ENCODE measurements at regions of chr7 and their contacts with region 1.

Region 1: GRCh38 chr7:138865843-138866242 is 67.8 kb upstream of the ATP6V0A4 start:
- DNase-seq: peak; percentile 73
- H3K4me3 Mint-ChIP-seq: no peak overlapping the region
- H3K27ac Mint-ChIP-seq: no peak overlapping the region
- H3K4me1 Mint-ChIP-seq: peaks cover 21% of the 10 kb centered on the region
- H3K27me3 Mint-ChIP-seq: peaks cover 3% of the 10 kb centered on the region

Region 2: GRCh38 chr7:138161600-138162081 is 704.2 kb before region 1 on chr7:
- CTCF ChIA-PET with region 1: interaction called, 7 read pairs
- POLR2A ChIA-PET with region 1: no interaction called
- intact Hi-C with region 1: loop called (anchors 1 kb)
- DNase-seq: peak; percentile 82
- H3K4me3 Mint-ChIP-seq: no peak overlapping the region
- H3K27ac Mint-ChIP-seq: no peak overlapping the region
- H3K4me1 Mint-ChIP-seq: no peaks in the 10 kb centered on the region
- H3K27me3 Mint-ChIP-seq: no peaks in the 10 kb centered on the region

Region 3: GRCh38 chr7:138625849-138626230 is 240.0 kb before region 1 on chr7:
- CTCF ChIA-PET with region 1: no interaction called
- POLR2A ChIA-PET with region 1: no interaction called
- intact Hi-C with region 1: loop called (anchors 10 kb)
- DNase-seq: no peak
- H3K4me3 Mint-ChIP-seq: no peak overlapping the region
- H3K27ac Mint-ChIP-seq: no peak overlapping the region
- H3K4me1 Mint-ChIP-seq: peaks cover 24% of the 10 kb centered on the region
- H3K27me3 Mint-ChIP-seq: no peaks in the 10 kb centered on the region

Measured in activated CD4-positive, alpha-beta memory T cell treated with anti-CD3 and anti-CD28 coated beads for 36 hours (primary cell).